Common myeloid progenitor, CD34-positive (primary cell): ENCODE measurements at regions of chr11 and their contacts with region 1.

Region 1: DNA sequence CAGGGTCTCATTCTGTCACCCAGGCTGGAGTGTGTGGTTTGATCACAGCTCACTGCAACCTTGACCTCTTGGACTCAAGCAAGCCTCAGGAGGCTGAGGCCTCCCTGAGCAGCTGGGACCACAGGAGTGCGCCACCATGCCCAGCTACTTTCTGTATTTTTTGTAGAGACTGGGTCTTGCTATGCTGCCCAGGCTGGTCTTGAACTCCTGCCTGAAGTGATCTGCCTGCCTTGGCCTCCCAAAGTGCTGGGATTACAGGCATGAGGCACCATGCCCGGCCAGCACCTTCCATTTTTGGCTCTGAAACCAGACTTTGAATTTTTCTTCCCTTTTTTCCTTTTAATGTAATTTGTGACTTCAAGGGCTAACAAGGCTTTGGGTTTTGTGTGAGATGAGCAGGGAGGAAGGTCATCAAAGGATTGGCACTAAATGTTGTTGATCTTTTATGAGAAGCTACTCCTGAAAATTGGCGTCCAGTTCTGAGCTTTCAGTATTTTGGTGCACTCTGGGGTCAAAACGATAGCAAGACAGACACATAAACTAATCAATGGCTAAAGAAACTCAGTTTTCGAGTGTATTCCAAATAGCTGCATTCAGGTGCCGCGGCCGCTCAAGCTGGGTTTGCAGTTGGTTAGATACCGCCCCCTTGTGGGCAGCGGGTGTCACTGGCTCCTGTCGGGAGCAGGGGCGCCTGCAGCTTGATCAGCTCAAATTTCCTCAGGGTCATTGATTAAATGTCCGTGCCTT is 51.9 kb upstream of the CLMP start:
- DNase-seq: peak; percentile 72 to 87 (median 83)
- H3K4me3 ChIP-seq: peak overlapping the region in 1 of 7 experiments; percentile 23
- H3K27ac ChIP-seq: no peak overlapping the region
- H3K4me1 ChIP-seq: peaks cover 0 to 3% (median 2%) of the 10 kb centered on the region in 4 experiments
- H3K27me3 ChIP-seq: no peaks in the 10 kb centered on the region

Region 2: DNA sequence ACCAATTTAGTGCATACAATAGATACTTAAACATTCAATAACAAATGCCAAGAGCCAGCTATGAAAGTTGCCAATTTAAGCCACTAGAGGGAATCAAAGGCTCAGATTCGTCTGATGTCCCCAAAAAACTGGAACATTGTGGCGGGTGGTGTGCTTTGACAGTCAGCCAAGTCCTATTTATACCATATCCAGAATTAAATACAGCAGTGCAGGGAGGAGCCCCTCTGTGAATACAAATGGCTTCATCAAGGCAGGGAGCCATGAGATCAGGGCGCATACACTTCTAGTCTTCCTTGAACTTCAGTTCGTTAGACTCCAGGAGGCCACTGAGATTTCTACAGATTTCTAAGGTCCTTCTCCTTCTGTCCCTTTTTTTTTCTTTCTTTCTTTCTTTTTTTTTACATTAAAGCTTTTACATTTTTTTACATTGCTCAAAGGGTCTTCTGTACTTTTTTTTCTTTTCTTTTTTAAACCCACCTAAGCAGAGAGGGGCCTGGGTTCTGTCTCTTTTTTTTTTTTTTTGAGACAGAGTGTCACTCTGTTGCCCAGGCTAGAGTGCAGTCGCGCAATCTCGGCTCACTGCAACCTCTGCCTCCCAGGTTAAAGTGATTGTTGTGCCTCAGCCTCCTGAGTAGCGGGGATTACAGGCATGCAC is 143.5 kb before region 1 on chr11:
- CTCF ChIA-PET with region 1: interaction called, 119 read pairs
- POLR2A ChIA-PET with region 1: no interaction called
- DNase-seq: peak; percentile 53 to 79 (median 73)
- H3K4me3 ChIP-seq: no peak overlapping the region
- H3K27ac ChIP-seq: no peak overlapping the region
- H3K4me1 ChIP-seq: no peaks in the 10 kb centered on the region
- H3K27me3 ChIP-seq: peaks cover 0 to 2% (median 0%) of the 10 kb centered on the region in 5 experiments

Region 3: DNA sequence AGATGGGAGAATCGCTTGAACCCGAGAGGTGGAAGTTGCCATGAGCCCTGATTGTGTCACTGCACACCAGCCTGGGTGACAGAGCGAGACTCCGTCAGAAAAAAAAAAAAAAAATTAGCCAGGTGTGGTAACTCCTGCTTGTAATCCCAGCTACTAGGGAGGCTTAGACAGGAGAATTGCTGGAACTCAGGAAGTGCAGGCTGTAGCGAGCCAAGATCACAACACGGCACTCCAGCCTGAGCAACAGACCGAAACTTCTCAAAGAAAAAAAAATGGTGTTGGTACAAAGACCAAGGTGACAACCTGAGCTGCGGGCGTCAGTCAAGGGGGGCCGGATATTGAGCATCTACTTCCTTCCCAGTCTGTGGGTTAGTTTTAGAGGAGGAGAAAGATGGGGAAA is 136.6 kb before region 1 on chr11:
- CTCF ChIA-PET with region 1: interaction called, 119 read pairs
- POLR2A ChIA-PET with region 1: no interaction called
- DNase-seq: no peak
- H3K4me3 ChIP-seq: no peak overlapping the region
- H3K27ac ChIP-seq: no peak overlapping the region
- H3K4me1 ChIP-seq: no peaks in the 10 kb centered on the region
- H3K27me3 ChIP-seq: no peaks in the 10 kb centered on the region

Region 4: GRCh38 chr11:123122341-123122740 is 124.6 kb before region 1 on chr11:
- CTCF ChIA-PET with region 1: interaction called, 10 read pairs
- POLR2A ChIA-PET with region 1: no interaction called
- DNase-seq: no peak
- H3K4me3 ChIP-seq: no peak overlapping the region
- H3K27ac ChIP-seq: no peak overlapping the region
- H3K4me1 ChIP-seq: peaks cover 0 to 7% (median 2%) of the 10 kb centered on the region in 4 experiments
- H3K27me3 ChIP-seq: no peaks in the 10 kb centered on the region

Region 5: DNA sequence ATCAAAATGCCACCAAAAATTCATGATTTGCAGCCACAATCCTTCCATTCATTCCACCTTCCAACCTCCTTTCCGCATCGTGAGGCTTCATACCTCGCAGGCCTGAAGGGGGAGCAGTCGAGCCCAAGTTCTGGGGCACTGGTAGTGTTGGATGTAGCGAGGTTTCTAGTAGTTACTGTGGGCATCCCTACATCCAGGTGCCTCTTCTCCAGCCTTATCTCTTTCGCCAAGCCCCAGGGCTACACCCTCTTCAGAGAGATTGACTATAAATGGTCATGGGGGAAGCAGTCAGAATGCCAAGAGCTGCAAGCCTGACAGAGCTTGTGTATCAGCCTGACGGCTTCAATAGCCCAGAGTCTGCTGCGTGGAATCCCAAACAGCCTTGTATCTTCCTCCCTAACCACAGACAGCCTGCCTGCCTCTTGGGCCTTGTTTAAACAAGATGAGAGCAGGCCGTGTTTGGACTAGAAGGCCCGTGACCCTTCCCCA is 80.8 kb before region 1 on chr11:
- CTCF ChIA-PET with region 1: interaction called, 10 read pairs
- POLR2A ChIA-PET with region 1: no interaction called
- DNase-seq: peak in 2 of 3 donors; percentile 6 to 15
- H3K4me3 ChIP-seq: no peak overlapping the region
- H3K27ac ChIP-seq: no peak overlapping the region
- H3K4me1 ChIP-seq: no peaks in the 10 kb centered on the region
- H3K27me3 ChIP-seq: peaks cover 0 to 4% (median 0%) of the 10 kb centered on the region in 5 experiments

Region 6: GRCh38 chr11:123235117-123235655 is 11.7 kb before region 1 on chr11:
- CTCF ChIA-PET with region 1: interaction called, 21 read pairs
- POLR2A ChIA-PET with region 1: no interaction called
- DNase-seq: peak; percentile 51 to 68 (median 68)
- H3K4me3 ChIP-seq: no peak overlapping the region
- H3K27ac ChIP-seq: no peak overlapping the region
- H3K4me1 ChIP-seq: peaks cover 0 to 5% (median 0%) of the 10 kb centered on the region in 4 experiments
- H3K27me3 ChIP-seq: no peaks in the 10 kb centered on the region

Region 7: GRCh38 chr11:123261345-123262106 is 14.6 kb after region 1 on chr11:
- CTCF ChIA-PET with region 1: interaction called, 26 read pairs
- POLR2A ChIA-PET with region 1: no interaction called
- DNase-seq: peak; percentile 56 to 76 (median 73)
- H3K4me3 ChIP-seq: peak overlapping the region in 2 of 7 experiments; percentile 61 to 65
- H3K27ac ChIP-seq: no peak overlapping the region
- H3K4me1 ChIP-seq: peaks cover 8 to 35% (median 23%) of the 10 kb centered on the region in 4 experiments
- H3K27me3 ChIP-seq: no peaks in the 10 kb centered on the region

Region 8: GRCh38 chr11:123640029-123640428 is 393.1 kb after region 1 on chr11:
- CTCF ChIA-PET with region 1: no interaction called
- POLR2A ChIA-PET with region 1: no interaction called
- DNase-seq: no peak
- H3K4me3 ChIP-seq: no peak overlapping the region
- H3K27ac ChIP-seq: no peak overlapping the region
- H3K4me1 ChIP-seq: peaks cover 0 to 4% (median 2%) of the 10 kb centered on the region in 4 experiments
- H3K27me3 ChIP-seq: peaks cover 0 to 9% (median 0%) of the 10 kb centered on the region in 5 experiments